ENCODE measurements at regions of chr1 and their contacts with region 1.

Region 1: GRCh38 chr1:222713091-222713961 is 962 bp downstream of the BROX start:
- DNase-seq: peak; percentile 90 to 98 (median 94)
- ATAC-seq: peak; percentile 78 to 81
- H3K4me3 Mint-ChIP-seq: peak overlapping the region; percentile 96 to 100 (median 97)
- H3K27ac Mint-ChIP-seq: peak overlapping the region; percentile 99 to 100 (median 100)
- H3K4me1 Mint-ChIP-seq: peaks cover 8 to 59% (median 54%) of the 10 kb centered on the region in 4 donors
- H3K27me3 Mint-ChIP-seq: no peaks in the 10 kb centered on the region

Region 2: DNA sequence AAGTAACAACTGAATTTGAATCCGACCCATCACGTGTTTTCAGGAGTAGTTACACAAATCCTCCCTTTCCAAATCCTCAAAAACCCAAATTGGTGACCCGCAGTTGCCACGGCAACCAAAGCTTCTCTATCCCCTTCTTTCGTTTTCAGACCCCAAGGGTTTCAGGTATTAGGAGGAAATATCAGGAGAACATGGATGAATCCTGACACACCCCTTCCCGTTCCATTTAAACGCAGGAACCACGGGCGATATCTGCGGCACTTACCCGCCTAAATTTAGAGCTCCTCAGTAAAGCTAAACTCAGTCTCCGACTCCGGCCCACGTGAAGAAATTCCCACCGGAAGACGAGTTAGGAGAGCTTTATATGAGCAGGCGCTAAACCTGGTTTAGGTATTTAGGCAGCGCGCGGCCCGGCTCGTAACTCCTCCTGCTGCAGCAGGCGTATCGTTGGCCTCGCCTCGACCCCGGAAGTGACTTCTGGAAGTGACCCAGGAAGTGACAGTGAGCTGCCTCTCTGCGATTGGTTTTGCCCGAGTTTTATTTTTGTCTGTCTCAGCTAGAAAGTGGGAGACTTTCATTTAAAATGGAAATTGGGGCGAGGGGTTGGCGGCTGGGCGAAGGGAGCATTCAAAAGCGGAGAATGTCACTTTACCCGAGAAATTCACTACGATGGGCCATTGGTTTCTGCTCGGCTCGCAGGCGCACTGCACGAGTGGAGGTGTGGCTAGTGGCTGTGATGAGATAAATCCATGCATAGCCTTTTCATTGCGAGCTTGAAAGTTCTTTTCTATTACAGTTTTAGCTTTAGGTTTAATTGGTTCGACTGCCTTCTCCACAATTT is 123.6 kb before region 1 on chr1 and contains the start of gene TAF1A:
- POLR2A ChIA-PET with region 1: interaction called, 15 read pairs
- DNase-seq: peak; percentile 74 to 95 (median 84)
- ATAC-seq: peak; percentile 99
- H3K4me3 Mint-ChIP-seq: peak within 1 kb of the TSS; percentile 92 to 99 (median 98)
- H3K27ac Mint-ChIP-seq: peak within 1 kb of the TSS; percentile 94 to 100 (median 98)
- H3K4me1 Mint-ChIP-seq: peaks cover 16 to 55% (median 48%) of the 10 kb centered on the region in 4 donors
- H3K27me3 Mint-ChIP-seq: no peaks in the 10 kb centered on the region
- polyA plus RNA-seq, gene TAF1A: 2.7 to 5.8 (median 5.5) TPM

Region 3: GRCh38 chr1:222617367-222617951 is 95.9 kb before region 1 on chr1:
- POLR2A ChIA-PET with region 1: interaction called, 15 read pairs
- DNase-seq: peak; percentile 86 to 97 (median 94)
- ATAC-seq: peak; percentile 88 to 91
- H3K4me3 Mint-ChIP-seq: peak overlapping the region; percentile 88 to 98 (median 94)
- H3K27ac Mint-ChIP-seq: peak overlapping the region; percentile 93 to 99 (median 98)
- H3K4me1 Mint-ChIP-seq: peaks cover 22 to 39% (median 37%) of the 10 kb centered on the region in 4 donors
- H3K27me3 Mint-ChIP-seq: peaks cover 3 to 28% (median 10%) of the 10 kb centered on the region in 5 donors

Region 4: DNA sequence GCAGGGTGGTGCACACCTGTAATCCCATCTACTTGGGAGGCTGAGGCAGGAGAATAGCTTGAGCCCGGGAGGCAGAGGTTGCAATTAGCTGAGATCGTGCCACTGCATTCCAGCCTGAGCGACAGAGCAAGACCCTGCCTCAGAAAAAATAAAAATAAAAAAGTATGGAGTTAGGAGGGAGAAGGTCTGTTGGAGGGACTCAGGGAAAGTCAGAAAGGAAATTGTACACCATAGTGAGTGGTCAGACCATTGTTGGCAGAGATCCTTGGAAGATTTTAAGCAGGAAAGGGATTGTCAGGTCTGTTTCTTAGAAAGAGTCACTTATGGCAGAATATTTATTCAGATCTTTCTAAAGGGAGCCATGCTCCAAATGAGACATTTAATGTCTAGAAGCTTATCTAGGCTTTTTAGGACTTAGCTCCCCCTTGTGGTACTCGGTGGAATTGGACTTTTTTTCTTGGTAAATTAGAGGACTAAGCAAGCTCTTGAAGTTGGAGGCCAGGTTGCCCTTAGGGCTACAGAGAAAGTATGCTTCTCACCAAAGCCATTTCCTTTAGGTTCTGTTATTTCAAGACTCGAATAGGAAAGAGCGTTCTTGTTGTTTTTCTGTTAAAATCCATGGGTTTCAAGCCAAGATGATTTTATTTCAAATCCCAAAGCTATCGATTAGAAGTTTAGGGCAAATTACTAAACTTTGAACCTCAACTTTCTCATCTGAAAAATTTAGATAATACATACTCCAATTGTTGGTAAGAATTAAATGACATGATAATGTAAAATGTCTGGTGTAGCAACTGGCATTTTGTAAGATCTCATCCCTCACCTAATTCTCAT is 78.9 kb before region 1 on chr1:
- POLR2A ChIA-PET with region 1: interaction called, 13 read pairs
- DNase-seq: peak; percentile 17 to 84 (median 76)
- ATAC-seq: peak; percentile 92 to 94
- H3K4me3 Mint-ChIP-seq: no peak overlapping the region
- H3K27ac Mint-ChIP-seq: peak overlapping the region in 8 of 10 donors; percentile 2 to 87 (median 68)
- H3K4me1 Mint-ChIP-seq: peaks cover 7 to 18% (median 14%) of the 10 kb centered on the region in 4 donors
- H3K27me3 Mint-ChIP-seq: no peaks in the 10 kb centered on the region

Region 5: GRCh38 chr1:222643938-222644635 is 69.2 kb before region 1 on chr1:
- POLR2A ChIA-PET with region 1: interaction called, 55 read pairs
- DNase-seq: peak; percentile 91 to 99 (median 97)
- ATAC-seq: peak; percentile 88 to 92
- H3K4me3 Mint-ChIP-seq: peak overlapping the region; percentile 83 to 100 (median 96)
- H3K27ac Mint-ChIP-seq: peak overlapping the region; percentile 92 to 100 (median 99)
- H3K4me1 Mint-ChIP-seq: peaks cover 5 to 44% (median 35%) of the 10 kb centered on the region in 4 donors
- H3K27me3 Mint-ChIP-seq: no peaks in the 10 kb centered on the region

Region 6: GRCh38 chr1:222654849-222655248 is 58.5 kb before region 1 on chr1:
- POLR2A ChIA-PET with region 1: interaction called, 22 read pairs
- DNase-seq: peak; percentile 48 to 89 (median 81)
- ATAC-seq: peak; percentile 98 to 99
- H3K4me3 Mint-ChIP-seq: peak overlapping the region; percentile 22 to 82 (median 68)
- H3K27ac Mint-ChIP-seq: peak overlapping the region; percentile 88 to 97 (median 95)
- H3K4me1 Mint-ChIP-seq: peaks cover 34 to 67% (median 63%) of the 10 kb centered on the region in 4 donors
- H3K27me3 Mint-ChIP-seq: no peaks in the 10 kb centered on the region

Region 7: GRCh38 chr1:222798116-222798515 is 84.8 kb after region 1 on chr1:
- POLR2A ChIA-PET with region 1: no interaction called
- DNase-seq: no peak
- ATAC-seq: no peak
- H3K4me3 Mint-ChIP-seq: no peak overlapping the region
- H3K27ac Mint-ChIP-seq: no peak overlapping the region
- H3K4me1 Mint-ChIP-seq: peaks cover 0 to 13% (median 6%) of the 10 kb centered on the region in 4 donors
- H3K27me3 Mint-ChIP-seq: peaks cover 0 to 2% (median 0%) of the 10 kb centered on the region in 5 donors

Region 8: GRCh38 chr1:222994506-222995235 is 281.3 kb after region 1 on chr1:
- POLR2A ChIA-PET with region 1: no interaction called
- DNase-seq: no peak
- ATAC-seq: no peak
- H3K4me3 Mint-ChIP-seq: no peak overlapping the region
- H3K27ac Mint-ChIP-seq: no peak overlapping the region
- H3K4me1 Mint-ChIP-seq: no peaks in the 10 kb centered on the region
- H3K27me3 Mint-ChIP-seq: no peaks in the 10 kb centered on the region